Activated CD4-positive, alpha-beta T cell treated with anti-CD3 and anti-CD28 coated beads for 36 hours (primary cell): ENCODE measurements at regions of chr19 and their contacts with region 1.

Region 1: GRCh38 chr19:14405758-14406644 is 13.1 kb downstream of the DDX39A start:
- DNase-seq: peak; percentile 96
- ATAC-seq: peak; percentile 78
- H3K4me3 Mint-ChIP-seq: peak overlapping the region; percentile 12
- H3K27ac Mint-ChIP-seq: no peak overlapping the region
- H3K4me1 Mint-ChIP-seq: peaks cover 16% of the 10 kb centered on the region
- H3K27me3 Mint-ChIP-seq: no peaks in the 10 kb centered on the region

Region 2: GRCh38 chr19:14160017-14160703 is 245.8 kb before region 1 on chr19:
- CTCF ChIA-PET with region 1: no interaction called
- POLR2A ChIA-PET with region 1: no interaction called
- intact Hi-C with region 1: no loop called
- DNase-seq: no peak
- ATAC-seq: no peak
- H3K4me3 Mint-ChIP-seq: no peak overlapping the region
- H3K27ac Mint-ChIP-seq: no peak overlapping the region
- H3K4me1 Mint-ChIP-seq: no peaks in the 10 kb centered on the region
- H3K27me3 Mint-ChIP-seq: no peaks in the 10 kb centered on the region

Region 3: DNA sequence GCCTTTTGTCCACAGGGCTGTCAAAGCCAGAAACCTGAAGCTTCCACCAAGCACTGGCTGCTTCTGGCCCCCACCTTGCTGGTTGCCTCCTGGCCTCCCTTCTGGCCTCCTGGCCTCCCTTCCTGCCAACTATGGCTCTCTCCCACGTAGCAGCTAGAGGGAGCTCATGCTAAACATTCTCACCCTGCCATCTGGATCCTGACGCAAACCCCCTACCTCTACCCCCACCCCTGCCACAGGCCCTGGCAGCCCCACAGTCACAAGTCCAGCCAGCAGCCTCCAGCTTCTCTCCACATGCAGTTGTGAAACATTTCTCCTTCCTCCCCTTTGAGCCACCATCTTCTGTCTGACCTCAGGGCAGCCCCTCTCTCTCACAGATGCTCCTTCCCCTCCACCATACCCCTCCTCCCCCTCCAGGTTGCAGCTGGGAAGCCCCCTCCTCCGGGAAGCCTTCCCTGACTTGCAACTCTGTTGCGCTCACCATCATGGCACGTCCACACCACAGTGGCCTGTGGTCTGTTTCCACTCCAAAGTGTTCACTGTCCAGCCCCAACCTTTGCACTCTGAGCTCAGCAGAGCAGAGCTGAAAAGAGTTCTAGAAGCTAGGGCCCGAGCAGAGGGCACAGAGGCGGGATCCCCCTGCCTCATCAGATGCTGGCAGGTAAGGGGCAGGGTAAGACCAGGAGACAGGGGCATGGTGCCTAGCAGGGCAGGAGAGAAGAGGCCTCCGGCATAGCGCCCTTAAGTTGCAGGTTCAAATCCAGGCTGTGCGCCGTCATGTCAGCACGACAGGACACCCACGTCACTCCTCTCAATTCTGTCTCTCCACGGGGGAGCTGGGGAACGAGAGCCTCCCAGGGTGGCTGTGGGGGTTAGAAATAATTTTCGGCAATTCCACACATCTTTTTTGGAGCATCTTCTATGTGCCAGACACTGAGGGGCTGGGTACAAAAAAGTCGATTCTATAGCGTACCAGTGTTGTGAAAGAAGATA is 207.3 kb before region 1 on chr19:
- CTCF ChIA-PET with region 1: interaction called, 4 read pairs
- POLR2A ChIA-PET with region 1: no interaction called
- intact Hi-C with region 1: loop called (anchors 5 to 10 kb)
- DNase-seq: peak; percentile 21
- ATAC-seq: no peak
- H3K4me3 Mint-ChIP-seq: no peak overlapping the region
- H3K27ac Mint-ChIP-seq: no peak overlapping the region
- H3K4me1 Mint-ChIP-seq: peaks cover 21% of the 10 kb centered on the region
- H3K27me3 Mint-ChIP-seq: no peaks in the 10 kb centered on the region

Region 4: GRCh38 chr19:14354445-14354844 is 51.6 kb before region 1 on chr19:
- CTCF ChIA-PET with region 1: interaction called, 33 read pairs
- POLR2A ChIA-PET with region 1: interaction called, 3 read pairs
- intact Hi-C with region 1: loop called in 1 of 2 experiments (anchors 2 kb)
- DNase-seq: no peak
- ATAC-seq: no peak
- H3K4me3 Mint-ChIP-seq: no peak overlapping the region
- H3K27ac Mint-ChIP-seq: no peak overlapping the region
- H3K4me1 Mint-ChIP-seq: peaks cover 39% of the 10 kb centered on the region
- H3K27me3 Mint-ChIP-seq: no peaks in the 10 kb centered on the region

Region 5: DNA sequence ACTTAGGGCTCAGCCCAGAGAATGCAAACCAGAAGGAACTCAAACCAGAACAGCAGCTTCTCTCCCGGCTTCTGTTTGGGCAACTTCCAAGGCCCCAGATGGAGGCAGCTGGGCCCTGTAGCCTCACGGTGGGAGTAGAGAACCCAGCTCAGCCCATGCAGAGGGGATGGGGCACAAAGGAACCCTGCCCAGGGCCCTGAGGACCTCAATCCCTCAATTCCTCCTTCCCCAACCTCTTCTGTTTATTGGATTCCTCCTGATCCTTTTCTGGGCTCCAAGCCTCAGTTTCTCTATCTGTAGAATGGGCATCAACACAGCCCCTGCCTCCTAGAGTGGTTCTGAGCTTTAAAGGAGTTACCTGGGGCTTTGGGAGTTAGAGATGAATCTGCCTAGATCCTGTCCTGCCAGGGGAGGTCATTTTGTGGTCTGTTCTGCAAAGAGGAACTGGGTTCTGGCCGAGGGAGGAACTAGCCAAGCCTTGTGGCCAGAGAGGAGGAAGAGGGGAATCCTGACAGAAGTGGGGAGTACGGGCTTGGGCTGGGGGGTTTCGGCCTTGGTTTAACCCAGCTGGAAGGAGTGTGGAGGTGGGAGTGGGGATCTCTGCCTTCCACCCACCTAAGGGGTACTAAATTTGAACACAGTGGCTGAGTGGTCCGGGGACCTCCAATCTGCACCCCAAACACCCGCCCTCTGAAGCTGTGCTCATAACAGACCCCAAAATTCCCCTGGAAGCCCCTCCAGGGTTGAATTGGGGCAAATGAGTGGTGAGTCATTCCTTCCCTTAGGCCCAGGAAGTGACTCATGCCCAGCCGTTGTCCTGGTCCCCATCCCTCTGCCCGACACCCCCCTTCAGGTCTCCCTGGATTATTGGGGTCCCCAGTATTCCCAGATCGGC is 22.1 kb before region 1 on chr19:
- CTCF ChIA-PET with region 1: interaction called, 6 read pairs
- POLR2A ChIA-PET with region 1: interaction called, 10 read pairs
- intact Hi-C with region 1: loop called in 1 of 2 experiments (anchors 2 kb)
- DNase-seq: peak; percentile 72
- ATAC-seq: peak; percentile 10
- H3K4me3 Mint-ChIP-seq: peak overlapping the region; percentile 92
- H3K27ac Mint-ChIP-seq: peak overlapping the region; percentile 99
- H3K4me1 Mint-ChIP-seq: peaks cover 40% of the 10 kb centered on the region
- H3K27me3 Mint-ChIP-seq: no peaks in the 10 kb centered on the region